CD8-positive, alpha-beta T cell (primary cell): ENCODE measurements at regions of chr5 and their contacts with region 1.

Region 1: DNA sequence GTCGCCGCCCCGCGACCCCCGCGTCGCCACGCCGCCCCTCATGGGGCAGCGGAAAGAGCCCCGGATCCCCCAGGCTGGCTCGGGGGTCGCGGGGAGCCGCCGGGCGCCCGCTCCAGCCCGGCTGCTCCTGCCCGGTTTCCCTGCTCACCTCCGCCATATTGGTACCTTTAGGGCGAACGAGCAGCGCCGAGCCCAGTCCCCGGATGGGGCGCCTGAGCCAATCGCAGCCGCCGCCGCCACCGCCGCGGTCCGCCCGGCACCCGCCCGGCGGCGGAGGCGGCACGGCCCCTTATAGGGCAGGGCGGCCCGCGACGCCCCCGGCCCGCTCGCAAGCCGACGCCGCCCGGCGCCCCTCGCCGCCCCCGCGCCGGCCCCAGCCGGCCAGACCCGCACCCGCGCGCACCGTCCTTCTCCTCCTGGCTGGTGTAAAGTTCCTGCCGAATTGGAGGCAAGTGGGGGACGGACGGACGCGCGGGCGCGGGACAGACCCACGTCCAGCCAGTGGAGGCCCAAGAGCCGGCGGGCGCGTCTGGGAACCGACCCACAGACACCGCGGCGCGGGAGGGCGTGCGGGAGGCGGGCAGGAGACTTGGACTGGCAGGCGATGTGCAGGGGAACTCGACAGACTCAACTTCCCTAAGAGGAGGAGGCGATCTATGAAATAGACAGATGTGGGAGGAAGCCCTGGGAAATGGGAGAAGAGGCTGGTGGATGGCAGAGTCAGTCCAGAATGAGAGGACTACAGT is at the start of gene MIER3:
- DNase-seq: peak; percentile 50 to 86 (median 78)
- ATAC-seq: peak; percentile 92
- H3K4me3 ChIP-seq: peak within 1 kb of the TSS; percentile 66 to 69
- H3K4me3 Mint-ChIP-seq: peak within 1 kb of the TSS; percentile 95
- H3K27ac ChIP-seq: peak within 1 kb of the TSS; percentile 37 to 40
- H3K27ac Mint-ChIP-seq: peak within 1 kb of the TSS; percentile 87
- H3K4me1 ChIP-seq: peaks cover 16% of the 10 kb centered on the region
- H3K4me1 Mint-ChIP-seq: peaks cover 23% of the 10 kb centered on the region
- H3K27me3 ChIP-seq: no peaks in the 10 kb centered on the region
- H3K27me3 Mint-ChIP-seq: peaks cover 14% of the 10 kb centered on the region
- CTCF ChIP-seq: no peak
- total RNA-seq, gene MIER3: 29.3 to 39.2 TPM

Region 2: GRCh38 chr5:55307383-55308253 is 1644.5 kb before region 1 on chr5 and contains the starts of genes DHX29 and MTREX:
- CTCF ChIA-PET with region 1: no interaction called
- POLR2A ChIA-PET with region 1: no interaction called
- intact Hi-C with region 1: loop called in 1 of 2 experiments (anchors 5 kb)
- DNase-seq: peak; percentile 76 to 93 (median 87)
- ATAC-seq: peak; percentile 90
- H3K4me3 ChIP-seq: peak within 1 kb of the TSS; percentile 72 to 76
- H3K4me3 Mint-ChIP-seq: no peak within 1 kb of the TSS
- H3K27ac ChIP-seq: peak within 1 kb of the TSS; percentile 86 to 90
- H3K27ac Mint-ChIP-seq: no peak within 1 kb of the TSS
- H3K4me1 ChIP-seq: peaks cover 41% of the 10 kb centered on the region
- H3K4me1 Mint-ChIP-seq: peaks cover 38% of the 10 kb centered on the region
- H3K27me3 ChIP-seq: no peaks in the 10 kb centered on the region
- H3K27me3 Mint-ChIP-seq: no peaks in the 10 kb centered on the region
- CTCF ChIP-seq: no peak
- total RNA-seq, gene DHX29: 15.4 to 19.9 TPM
- total RNA-seq, gene MTREX: 62.8 to 66.5 TPM

Region 3: GRCh38 chr5:55711968-55712859 is 1239.9 kb before region 1 on chr5 and contains the start of gene SLC38A9:
- CTCF ChIA-PET with region 1: no interaction called
- POLR2A ChIA-PET with region 1: no interaction called
- intact Hi-C with region 1: loop called in 1 of 2 experiments (anchors 5 kb)
- DNase-seq: peak; percentile 83 to 94 (median 91)
- ATAC-seq: peak; percentile 99
- H3K4me3 ChIP-seq: peak within 1 kb of the TSS; percentile 92 to 100
- H3K4me3 Mint-ChIP-seq: peak within 1 kb of the TSS; percentile 98
- H3K27ac ChIP-seq: peak within 1 kb of the TSS; percentile 54 to 73
- H3K27ac Mint-ChIP-seq: peak within 1 kb of the TSS; percentile 88
- H3K4me1 ChIP-seq: peaks cover 9% of the 10 kb centered on the region
- H3K4me1 Mint-ChIP-seq: peaks cover 31% of the 10 kb centered on the region
- H3K27me3 ChIP-seq: no peaks in the 10 kb centered on the region
- H3K27me3 Mint-ChIP-seq: peaks cover 3% of the 10 kb centered on the region
- CTCF ChIP-seq: no peak
- total RNA-seq, gene SLC38A9: 6.0 to 6.8 TPM

Region 4: DNA sequence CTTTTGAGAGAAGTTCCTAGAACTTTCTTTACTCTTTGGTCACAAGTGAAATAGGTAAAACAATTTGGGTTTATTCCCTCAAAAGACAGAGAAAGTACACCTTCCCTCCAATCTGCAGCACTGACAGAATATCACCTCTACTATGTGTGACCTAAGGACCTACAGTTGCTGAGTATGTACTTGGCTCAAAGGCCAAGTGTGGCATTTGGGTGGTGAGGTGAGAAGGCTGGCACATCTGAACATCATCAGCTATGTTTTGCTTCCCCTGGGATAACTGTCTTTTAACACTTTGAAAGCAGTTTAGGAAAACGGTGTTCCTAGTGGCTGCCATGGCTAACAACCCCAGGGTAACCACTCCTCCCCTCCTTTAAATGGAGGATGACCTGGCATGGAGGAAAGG is 17.8 kb before region 1 on chr5:
- CTCF ChIA-PET with region 1: no interaction called
- POLR2A ChIA-PET with region 1: interaction called, 3 read pairs
- intact Hi-C with region 1: loop called in 1 of 2 experiments (anchors 2 kb)
- DNase-seq: no peak
- ATAC-seq: no peak
- H3K4me3 ChIP-seq: no peak overlapping the region
- H3K4me3 Mint-ChIP-seq: no peak overlapping the region
- H3K27ac ChIP-seq: no peak overlapping the region
- H3K27ac Mint-ChIP-seq: no peak overlapping the region
- H3K4me1 ChIP-seq: no peaks in the 10 kb centered on the region
- H3K4me1 Mint-ChIP-seq: no peaks in the 10 kb centered on the region
- H3K27me3 ChIP-seq: no peaks in the 10 kb centered on the region
- H3K27me3 Mint-ChIP-seq: no peaks in the 10 kb centered on the region
- CTCF ChIP-seq: no peak

Region 5: DNA sequence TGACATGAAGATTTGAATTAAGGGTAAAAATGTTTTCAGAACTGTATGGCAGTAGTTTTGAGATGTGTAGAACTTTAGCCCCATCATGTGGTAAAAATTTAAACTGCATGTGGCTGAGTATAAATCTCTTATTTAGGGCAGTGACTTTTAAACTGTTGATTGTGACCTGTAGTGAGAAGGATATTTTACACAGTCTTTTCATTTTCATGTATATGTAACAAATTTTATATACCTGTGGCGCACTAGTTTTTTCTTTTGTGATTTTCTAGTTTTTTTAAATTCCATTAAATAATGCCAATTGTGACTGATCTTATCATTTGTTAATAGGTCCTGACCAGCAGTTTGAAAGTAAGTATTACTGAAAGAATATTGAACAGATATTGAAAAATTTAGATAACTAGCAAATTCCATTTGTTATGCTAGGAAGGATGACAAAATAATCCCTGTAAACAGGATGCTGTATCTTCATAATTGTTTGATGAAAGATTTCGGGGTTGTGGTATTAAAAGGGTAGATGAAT is 269.0 kb after region 1 on chr5:
- CTCF ChIA-PET with region 1: interaction called, 5 read pairs
- POLR2A ChIA-PET with region 1: no interaction called
- intact Hi-C with region 1: loop called (anchors 2 kb)
- DNase-seq: peak in 3 of 9 experiments; percentile 51 to 83 (median 78)
- ATAC-seq: peak; percentile 83
- H3K4me3 ChIP-seq: no peak overlapping the region
- H3K4me3 Mint-ChIP-seq: no peak overlapping the region
- H3K27ac ChIP-seq: no peak overlapping the region
- H3K27ac Mint-ChIP-seq: peak overlapping the region; percentile 64
- H3K4me1 ChIP-seq: peaks cover 14% of the 10 kb centered on the region
- H3K4me1 Mint-ChIP-seq: peaks cover 53% of the 10 kb centered on the region
- H3K27me3 ChIP-seq: no peaks in the 10 kb centered on the region
- H3K27me3 Mint-ChIP-seq: no peaks in the 10 kb centered on the region
- CTCF ChIP-seq: peak; percentile 99